ENCODE measurements at regions of chr17 and their contacts with region 1.

Region 1: GRCh38 chr17:61927200-61928165 is at the start of gene INTS2:
- DNase-seq: peak; percentile 94 to 97 (median 95)
- H3K4me3 ChIP-seq: peak within 1 kb of the TSS; percentile 90 to 100
- H3K4me3 Mint-ChIP-seq: peak within 1 kb of the TSS; percentile 86 to 97 (median 91)
- H3K27ac ChIP-seq: peak within 1 kb of the TSS; percentile 85
- H3K27ac Mint-ChIP-seq: peak within 1 kb of the TSS; percentile 91 to 96 (median 95)
- H3K4me1 ChIP-seq: peaks cover 17% of the 10 kb centered on the region
- H3K4me1 Mint-ChIP-seq: peaks cover 18 to 28% (median 23%) of the 10 kb centered on the region in 4 donors
- H3K27me3 ChIP-seq: no peaks in the 10 kb centered on the region
- H3K27me3 Mint-ChIP-seq: peaks cover 0 to 5% of the 10 kb centered on the region in 2 donors
- total RNA-seq, gene INTS2: 18.4 to 18.7 TPM

Region 2: DNA sequence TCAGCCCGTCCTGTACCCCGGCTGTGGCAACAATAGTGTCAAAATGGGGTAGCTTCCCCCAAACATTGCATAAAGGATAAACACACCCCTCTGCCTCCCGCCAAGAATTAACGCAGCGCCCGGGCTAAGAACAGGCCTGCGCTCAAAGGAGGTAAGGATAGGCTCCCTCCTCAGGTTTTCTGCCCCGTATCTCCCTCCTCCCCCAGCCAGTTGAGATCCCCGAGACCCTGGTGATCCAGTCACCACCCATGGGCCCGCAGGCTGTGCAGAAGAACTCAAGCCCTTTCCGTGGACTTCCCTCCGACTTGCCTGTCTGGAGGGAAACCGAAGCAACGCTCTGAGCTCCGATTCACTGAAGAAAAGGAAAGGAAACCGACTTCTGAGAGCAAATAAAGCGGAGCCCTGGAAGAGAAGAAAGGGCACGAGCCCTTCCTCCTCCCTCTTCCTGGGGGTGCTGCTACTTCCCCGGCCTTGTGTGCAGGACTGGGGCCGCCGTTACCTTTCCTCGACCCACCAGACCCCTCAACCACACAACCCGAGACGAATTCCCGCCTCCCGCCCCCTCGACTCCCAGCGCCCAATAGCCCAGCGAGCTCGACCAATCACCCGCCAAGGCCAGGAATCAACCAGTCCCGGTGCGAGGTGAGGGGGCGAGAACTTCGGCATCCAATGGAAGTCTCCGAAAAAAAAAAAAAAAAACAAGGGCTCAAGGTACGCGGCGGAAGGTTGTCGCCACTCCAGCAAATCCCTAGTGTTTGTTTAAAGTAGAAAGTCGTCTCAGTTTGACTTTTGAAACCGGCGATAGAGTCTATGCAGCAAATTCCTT is 64.3 kb before region 1 on chr17 and contains the start of gene BRIP1:
- CTCF ChIA-PET with region 1: no interaction called
- POLR2A ChIA-PET with region 1: interaction called, 3 read pairs
- intact Hi-C with region 1: loop called (anchors 2 kb)
- DNase-seq: peak; percentile 86 to 94 (median 86)
- H3K4me3 ChIP-seq: peak within 1 kb of the TSS; percentile 84 to 96
- H3K4me3 Mint-ChIP-seq: peak within 1 kb of the TSS; percentile 95 to 99 (median 97)
- H3K27ac ChIP-seq: peak within 1 kb of the TSS; percentile 66
- H3K27ac Mint-ChIP-seq: peak within 1 kb of the TSS; percentile 90 to 98 (median 95)
- H3K4me1 ChIP-seq: peaks cover 27% of the 10 kb centered on the region
- H3K4me1 Mint-ChIP-seq: peaks cover 22 to 33% (median 27%) of the 10 kb centered on the region in 4 donors
- H3K27me3 ChIP-seq: no peaks in the 10 kb centered on the region
- H3K27me3 Mint-ChIP-seq: no peaks in the 10 kb centered on the region
- total RNA-seq, gene BRIP1: 1.5 to 1.7 TPM

Region 3: DNA sequence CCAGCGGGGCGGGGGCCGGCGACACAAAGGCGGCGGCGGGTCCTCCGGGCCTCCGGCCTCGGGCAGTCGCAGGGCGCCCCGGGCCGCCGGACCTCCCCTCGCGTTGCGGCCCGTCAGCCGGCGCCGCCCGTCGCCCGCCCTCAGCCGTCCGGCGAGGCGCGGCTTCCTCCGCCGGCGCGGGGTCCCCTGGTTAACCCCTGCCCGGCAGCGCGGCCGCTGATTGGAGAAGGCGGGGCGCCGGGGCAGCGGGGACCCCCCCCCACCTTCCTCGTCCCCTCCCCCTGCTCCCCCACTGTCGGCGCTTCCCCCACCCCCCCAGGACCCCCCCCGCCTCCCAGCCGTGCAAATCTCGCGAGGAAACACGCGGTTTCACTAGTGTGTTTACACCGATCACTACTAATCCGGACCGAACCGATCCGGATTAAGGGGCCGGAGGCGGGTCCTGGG is 551.0 kb after region 1 on chr17 and contains the start of gene TLK2:
- CTCF ChIA-PET with region 1: no interaction called
- POLR2A ChIA-PET with region 1: no interaction called
- intact Hi-C with region 1: loop called (anchors 5 kb)
- DNase-seq: peak in 4 of 5 donors; percentile 71 to 76 (median 74)
- H3K4me3 ChIP-seq: peak within 1 kb of the TSS; percentile 23 to 38
- H3K4me3 Mint-ChIP-seq: peak within 1 kb of the TSS; percentile 89 to 96 (median 92)
- H3K27ac ChIP-seq: peak within 1 kb of the TSS; percentile 71
- H3K27ac Mint-ChIP-seq: peak within 1 kb of the TSS; percentile 85 to 98 (median 97)
- H3K4me1 ChIP-seq: peaks cover 12% of the 10 kb centered on the region
- H3K4me1 Mint-ChIP-seq: peaks cover 19 to 47% (median 34%) of the 10 kb centered on the region in 4 donors
- H3K27me3 ChIP-seq: no peaks in the 10 kb centered on the region
- H3K27me3 Mint-ChIP-seq: no peaks in the 10 kb centered on the region
- total RNA-seq, gene TLK2: 64.3 to 67.7 TPM

Measured in CD4-positive, alpha-beta memory T cell (primary cell).